ENCODE measurements at regions of chr11 and their contacts with region 1.

Region 1: DNA sequence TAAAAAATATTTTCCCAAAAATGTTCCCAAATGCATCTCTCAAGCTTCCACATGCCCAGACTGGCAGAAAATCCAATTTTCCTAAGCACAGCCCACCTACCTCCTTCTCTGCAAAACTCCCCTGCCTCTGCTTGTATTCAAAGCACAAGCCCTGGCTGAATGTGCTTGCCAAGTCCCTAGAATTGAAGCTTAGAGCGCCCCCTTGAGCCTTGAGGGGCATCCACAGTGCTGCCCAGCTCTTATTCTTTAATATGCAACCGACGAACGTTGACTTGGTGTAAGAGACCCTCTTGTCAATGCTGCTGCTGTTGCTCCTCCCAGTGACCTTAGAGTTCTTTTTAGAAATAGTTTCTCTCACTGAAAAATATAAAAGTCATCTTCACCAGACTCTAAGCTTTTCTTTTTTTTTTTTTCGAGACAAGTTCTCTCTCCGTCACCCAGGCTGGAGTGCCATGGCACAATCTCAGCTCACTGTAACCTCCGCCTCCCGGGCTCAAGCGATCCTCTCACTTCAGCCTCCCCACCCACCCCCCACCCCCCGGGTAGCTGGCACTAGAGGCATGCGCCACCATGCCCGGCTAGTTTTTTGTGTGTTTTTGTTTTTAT is 63.5 kb upstream of the CAPRIN1 start:
- DNase-seq: peak; percentile 87
- ATAC-seq: peak; percentile 84
- H3K4me3 Mint-ChIP-seq: no peak overlapping the region
- H3K27ac Mint-ChIP-seq: no peak overlapping the region
- H3K4me1 Mint-ChIP-seq: peaks cover 5% of the 10 kb centered on the region
- H3K27me3 Mint-ChIP-seq: peaks cover 7% of the 10 kb centered on the region
- CTCF ChIP-seq: peak; percentile 91

Region 2: GRCh38 chr11:33829433-33830141 is 158.5 kb before region 1 on chr11:
- CTCF ChIA-PET with region 1: interaction called, 20 read pairs
- POLR2A ChIA-PET with region 1: no interaction called
- intact Hi-C with region 1: no loop called
- DNase-seq: peak; percentile 84
- ATAC-seq: peak; percentile 84
- H3K4me3 Mint-ChIP-seq: peak overlapping the region; percentile 55
- H3K27ac Mint-ChIP-seq: no peak overlapping the region
- H3K4me1 Mint-ChIP-seq: peaks cover 6% of the 10 kb centered on the region
- H3K27me3 Mint-ChIP-seq: peaks cover 41% of the 10 kb centered on the region
- CTCF ChIP-seq: peak; percentile 71

Region 3: GRCh38 chr11:33857933-33858371 is 130.1 kb before region 1 on chr11:
- CTCF ChIA-PET with region 1: interaction called, 103 read pairs
- POLR2A ChIA-PET with region 1: interaction called, 3 read pairs
- intact Hi-C with region 1: loop called (anchors 1 kb)
- DNase-seq: peak; percentile 86
- ATAC-seq: peak; percentile 90
- H3K4me3 Mint-ChIP-seq: no peak overlapping the region
- H3K27ac Mint-ChIP-seq: no peak overlapping the region
- H3K4me1 Mint-ChIP-seq: no peaks in the 10 kb centered on the region
- H3K27me3 Mint-ChIP-seq: peaks cover 34% of the 10 kb centered on the region
- CTCF ChIP-seq: peak; percentile 86

Region 4: GRCh38 chr11:33970984-33971466 is 17.1 kb before region 1 on chr11:
- CTCF ChIA-PET with region 1: interaction called, 29 read pairs
- POLR2A ChIA-PET with region 1: no interaction called
- intact Hi-C with region 1: no loop called
- DNase-seq: peak; percentile 37
- ATAC-seq: peak; percentile 53
- H3K4me3 Mint-ChIP-seq: no peak overlapping the region
- H3K27ac Mint-ChIP-seq: no peak overlapping the region
- H3K4me1 Mint-ChIP-seq: no peaks in the 10 kb centered on the region
- H3K27me3 Mint-ChIP-seq: peaks cover 11% of the 10 kb centered on the region
- CTCF ChIP-seq: peak; percentile 54

Region 5: GRCh38 chr11:34006876-34007275 is 18.8 kb after region 1 on chr11:
- CTCF ChIA-PET with region 1: interaction called, 13 read pairs
- POLR2A ChIA-PET with region 1: no interaction called
- intact Hi-C with region 1: no loop called
- DNase-seq: no peak
- ATAC-seq: no peak
- H3K4me3 Mint-ChIP-seq: no peak overlapping the region
- H3K27ac Mint-ChIP-seq: no peak overlapping the region
- H3K4me1 Mint-ChIP-seq: no peaks in the 10 kb centered on the region
- H3K27me3 Mint-ChIP-seq: peaks cover 3% of the 10 kb centered on the region
- CTCF ChIP-seq: no peak

Region 6: GRCh38 chr11:34028425-34028824 is 40.3 kb after region 1 on chr11:
- CTCF ChIA-PET with region 1: no interaction called
- POLR2A ChIA-PET with region 1: no interaction called
- intact Hi-C with region 1: no loop called
- DNase-seq: no peak
- ATAC-seq: no peak
- H3K4me3 Mint-ChIP-seq: no peak overlapping the region
- H3K27ac Mint-ChIP-seq: no peak overlapping the region
- H3K4me1 Mint-ChIP-seq: no peaks in the 10 kb centered on the region
- H3K27me3 Mint-ChIP-seq: no peaks in the 10 kb centered on the region
- CTCF ChIP-seq: no peak

Measured in activated CD8-positive, alpha-beta T cell treated with anti-CD3 and anti-CD28 coated beads for 36 hours (primary cell).